ENCODE measurements at regions of chr15 and their contacts with region 1.

Region 1: DNA sequence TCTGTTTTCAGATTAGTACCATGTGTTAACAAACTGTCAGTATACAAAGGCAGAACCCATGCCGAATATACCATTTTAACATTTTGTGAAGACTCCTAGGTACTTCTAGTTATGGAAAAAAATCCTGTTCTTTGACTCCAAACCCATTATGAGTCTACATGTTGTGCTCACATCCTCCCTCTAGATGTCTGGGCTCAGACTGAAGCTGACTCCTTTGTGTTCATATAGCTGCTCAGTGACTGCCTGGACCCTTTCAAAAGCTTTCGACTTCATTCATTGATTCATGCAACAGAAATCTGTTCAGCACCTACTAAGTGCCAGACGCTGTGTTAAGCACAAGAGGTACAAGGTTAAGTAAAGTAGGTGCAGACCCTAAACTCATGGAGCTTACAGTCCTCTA is 60.5 kb downstream of the MEGF11 start:
- DNase-seq: no peak
- ATAC-seq: no peak
- H3K4me3 ChIP-seq: no peak overlapping the region
- H3K4me3 Mint-ChIP-seq: no peak overlapping the region
- H3K27ac ChIP-seq: no peak overlapping the region
- H3K27ac Mint-ChIP-seq: no peak overlapping the region
- H3K4me1 ChIP-seq: no peaks in the 10 kb centered on the region
- H3K4me1 Mint-ChIP-seq: peaks cover 0 to 1% (median 0%) of the 10 kb centered on the region in 7 donors
- H3K27me3 ChIP-seq: no peaks in the 10 kb centered on the region
- H3K27me3 Mint-ChIP-seq: peaks cover 0 to 12% (median 5%) of the 10 kb centered on the region in 5 donors

Region 2: DNA sequence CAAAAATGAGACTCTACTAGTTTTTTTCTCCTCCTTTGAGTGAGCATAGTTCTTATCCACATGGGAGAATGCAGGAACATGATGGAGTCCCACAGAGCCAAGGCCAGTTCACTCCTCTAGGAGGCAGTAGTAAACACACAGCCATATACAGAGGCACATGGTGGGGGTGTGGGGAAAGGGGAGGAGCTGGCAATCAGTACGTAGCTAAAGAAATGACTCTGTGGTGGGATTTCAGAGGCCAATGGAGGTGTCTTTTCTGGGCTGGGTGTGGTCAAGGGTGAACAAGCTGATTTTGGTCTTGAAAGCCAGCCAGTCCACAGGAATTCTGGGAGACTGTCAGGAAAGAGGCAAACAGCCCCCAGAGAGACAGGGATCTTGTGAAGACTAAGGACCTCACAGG is 330.4 kb before region 1 on chr15:
- CTCF ChIA-PET with region 1: no interaction called
- POLR2A ChIA-PET with region 1: no interaction called
- intact Hi-C with region 1: loop called in 1 of 2 experiments (anchors 5 kb)
- DNase-seq: peak in 8 of 9 donors; percentile 36 to 68 (median 54)
- ATAC-seq: peak; percentile 98
- H3K4me3 ChIP-seq: no peak overlapping the region
- H3K4me3 Mint-ChIP-seq: peak overlapping the region in 1 of 10 donors; percentile 29
- H3K27ac ChIP-seq: no peak overlapping the region
- H3K27ac Mint-ChIP-seq: peak overlapping the region in 1 of 9 donors; percentile 17
- H3K4me1 ChIP-seq: no peaks in the 10 kb centered on the region
- H3K4me1 Mint-ChIP-seq: peaks cover 0 to 13% (median 9%) of the 10 kb centered on the region in 7 donors
- H3K27me3 ChIP-seq: no peaks in the 10 kb centered on the region
- H3K27me3 Mint-ChIP-seq: peaks cover 0 to 9% (median 0%) of the 10 kb centered on the region in 5 donors

Region 3: DNA sequence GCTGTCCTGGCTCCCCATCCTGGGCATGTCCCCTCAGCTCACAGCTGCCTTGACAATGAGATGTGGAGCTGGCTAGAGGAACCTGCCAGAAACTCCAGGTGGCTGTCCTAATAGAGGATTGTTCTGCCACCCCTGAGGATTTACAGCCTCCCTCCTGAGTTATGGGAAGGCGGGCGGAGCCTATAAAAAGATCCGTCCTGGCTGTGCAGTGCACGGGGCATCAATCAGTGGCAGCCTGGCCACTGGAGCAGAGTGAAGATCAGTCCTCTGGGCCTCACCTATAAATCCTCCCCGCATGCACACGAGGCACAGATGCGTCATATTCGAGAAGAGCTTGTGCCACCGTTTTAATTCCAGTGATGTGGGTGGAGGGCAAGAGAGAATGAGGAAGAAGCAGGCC is 29.5 kb before region 1 on chr15:
- CTCF ChIA-PET with region 1: no interaction called
- POLR2A ChIA-PET with region 1: no interaction called
- intact Hi-C with region 1: no loop called
- DNase-seq: no peak
- ATAC-seq: no peak
- H3K4me3 ChIP-seq: no peak overlapping the region
- H3K4me3 Mint-ChIP-seq: no peak overlapping the region
- H3K27ac ChIP-seq: no peak overlapping the region
- H3K27ac Mint-ChIP-seq: no peak overlapping the region
- H3K4me1 ChIP-seq: no peaks in the 10 kb centered on the region
- H3K4me1 Mint-ChIP-seq: no peaks in the 10 kb centered on the region
- H3K27me3 ChIP-seq: no peaks in the 10 kb centered on the region
- H3K27me3 Mint-ChIP-seq: peaks cover 0 to 8% (median 0%) of the 10 kb centered on the region in 5 donors

Region 4: GRCh38 chr15:66251790-66252684 is 59.0 kb after region 1 on chr15:
- CTCF ChIA-PET with region 1: no interaction called
- POLR2A ChIA-PET with region 1: no interaction called
- intact Hi-C with region 1: no loop called
- DNase-seq: peak in 7 of 9 donors; percentile 22 to 63 (median 36)
- ATAC-seq: peak; percentile 73
- H3K4me3 ChIP-seq: peak overlapping the region; percentile 76
- H3K4me3 Mint-ChIP-seq: peak overlapping the region; percentile 58 to 96 (median 79)
- H3K27ac ChIP-seq: no peak overlapping the region
- H3K27ac Mint-ChIP-seq: no peak overlapping the region
- H3K4me1 ChIP-seq: peaks cover 0 to 14% of the 10 kb centered on the region in 2 donors
- H3K4me1 Mint-ChIP-seq: peaks cover 7 to 28% (median 18%) of the 10 kb centered on the region in 7 donors
- H3K27me3 ChIP-seq: peaks cover 3 to 28% of the 10 kb centered on the region in 2 donors
- H3K27me3 Mint-ChIP-seq: peaks cover 54 to 89% (median 70%) of the 10 kb centered on the region in 5 donors

Measured in naive thymus-derived CD4-positive, alpha-beta T cell (primary cell).